ENCODE measurements at regions of chr6 and their contacts with region 1.

Region 1: GRCh38 chr6:31814677-31815024 is 432 bp downstream of the HSPA1L start:
- DNase-seq: peak; percentile 98 to 99
- H3K4me3 ChIP-seq: peak overlapping the region; percentile 56 to 57
- H3K27ac ChIP-seq: peak overlapping the region; percentile 89 to 97
- H3K4me1 ChIP-seq: peaks cover 0 to 31% (median 18%) of the 10 kb centered on the region in 4 donors
- H3K27me3 ChIP-seq: no peaks in the 10 kb centered on the region
- CTCF ChIP-seq: no peak

Region 2: DNA sequence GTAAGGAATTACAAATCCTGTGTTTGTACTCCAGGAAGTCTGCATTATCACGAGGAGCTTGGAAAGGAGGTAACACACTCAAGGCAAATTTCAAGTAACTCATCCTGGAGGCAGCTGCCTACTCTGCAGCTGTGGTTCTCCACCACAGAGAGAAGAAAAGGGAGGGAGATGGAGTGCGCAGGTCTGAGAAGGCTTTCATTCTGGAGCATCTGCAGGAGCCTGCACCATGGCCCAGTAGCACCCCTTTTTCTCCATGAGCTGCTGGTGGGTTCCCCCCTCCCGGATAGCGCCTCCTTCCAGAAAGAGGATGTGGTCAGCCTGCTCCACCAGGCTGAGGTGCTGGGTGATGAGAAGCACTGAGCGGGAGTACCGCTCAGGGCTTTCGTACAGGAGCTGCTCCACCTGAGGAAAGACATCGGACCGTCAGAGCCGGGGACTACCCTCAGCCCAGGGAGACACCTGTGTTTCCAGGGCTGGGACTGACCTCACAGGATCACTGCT is 1030.8 kb after region 1 on chr6:
- intact Hi-C with region 1: loop called (anchors 5 kb)
- DNase-seq: no peak
- H3K4me3 ChIP-seq: peak overlapping the region; percentile 78 to 86
- H3K27ac ChIP-seq: peak overlapping the region; percentile 92 to 95
- H3K4me1 ChIP-seq: peaks cover 0 to 16% (median 11%) of the 10 kb centered on the region in 4 donors
- H3K27me3 ChIP-seq: no peaks in the 10 kb centered on the region
- CTCF ChIP-seq: no peak